CD4-positive, alpha-beta T cell (primary cell): ENCODE measurements at regions of chr6 and their contacts with region 1.

Region 1: DNA sequence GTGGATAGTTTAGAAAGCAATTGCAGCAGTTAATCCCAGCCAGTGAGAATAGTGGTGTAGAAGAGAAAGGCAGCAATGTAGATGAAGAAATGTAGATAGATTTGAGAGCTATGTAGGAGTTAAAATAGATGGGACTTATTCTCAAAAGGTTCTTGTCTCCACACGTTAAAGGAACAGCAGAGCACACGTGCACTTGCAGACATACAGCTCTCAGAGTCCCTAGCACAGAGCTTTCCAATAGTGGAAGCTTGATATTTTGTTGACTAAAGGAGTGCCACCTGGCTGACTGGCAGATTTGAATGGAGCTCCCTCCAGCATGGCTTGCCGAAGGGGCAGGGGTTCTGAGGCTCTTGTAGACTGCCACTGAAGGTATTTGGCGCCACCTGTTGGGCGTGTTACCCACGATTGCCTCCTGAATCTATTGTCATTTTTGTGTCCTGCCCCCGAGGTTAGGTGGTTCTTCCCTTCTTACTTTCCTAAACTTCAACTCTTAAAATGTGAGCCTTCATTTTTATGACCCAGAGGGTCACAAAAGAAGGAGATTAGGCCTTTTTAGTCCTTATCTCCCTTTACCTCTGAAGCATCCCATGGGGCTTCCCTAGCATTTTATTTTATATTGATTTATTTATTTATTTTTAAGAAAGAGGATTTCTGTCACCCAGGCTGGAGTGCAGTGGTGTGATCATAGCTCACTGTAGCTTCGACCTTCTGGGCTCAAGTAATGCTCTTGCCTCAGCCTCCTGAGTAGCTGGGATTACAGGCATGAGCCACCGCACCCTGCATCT is 16.4 kb downstream of the BRD2 start:
- DNase-seq: peak; percentile 83 to 97 (median 89)
- ATAC-seq: peak; percentile 98
- H3K4me3 ChIP-seq: no peak overlapping the region
- H3K4me3 Mint-ChIP-seq: no peak overlapping the region
- H3K27ac ChIP-seq: no peak overlapping the region
- H3K27ac Mint-ChIP-seq: peak overlapping the region; percentile 43
- H3K4me1 ChIP-seq: peaks cover 18% of the 10 kb centered on the region
- H3K4me1 Mint-ChIP-seq: peaks cover 28% of the 10 kb centered on the region
- H3K27me3 ChIP-seq: no peaks in the 10 kb centered on the region
- H3K27me3 Mint-ChIP-seq: no peaks in the 10 kb centered on the region
- CTCF ChIP-seq: peak; percentile 83

Region 2: GRCh38 chr6:31620586-31621319 is 1364.0 kb before region 1 on chr6 and contains the start of gene PRRC2A:
- CTCF ChIA-PET with region 1: no interaction called
- POLR2A ChIA-PET with region 1: no interaction called
- intact Hi-C with region 1: no loop called
- DNase-seq: peak in 10 of 14 experiments; percentile 71 to 96 (median 86)
- ATAC-seq: peak; percentile 20
- H3K4me3 ChIP-seq: peak within 1 kb of the TSS; percentile 74
- H3K4me3 Mint-ChIP-seq: peak within 1 kb of the TSS; percentile 93
- H3K27ac ChIP-seq: peak within 1 kb of the TSS; percentile 97 to 99
- H3K27ac Mint-ChIP-seq: peak within 1 kb of the TSS; percentile 92
- H3K4me1 ChIP-seq: peaks cover 38% of the 10 kb centered on the region
- H3K4me1 Mint-ChIP-seq: peaks cover 44% of the 10 kb centered on the region
- H3K27me3 ChIP-seq: no peaks in the 10 kb centered on the region
- H3K27me3 Mint-ChIP-seq: no peaks in the 10 kb centered on the region
- CTCF ChIP-seq: no peak
- total RNA-seq, gene PRRC2A: 206 to 215 TPM

Region 3: DNA sequence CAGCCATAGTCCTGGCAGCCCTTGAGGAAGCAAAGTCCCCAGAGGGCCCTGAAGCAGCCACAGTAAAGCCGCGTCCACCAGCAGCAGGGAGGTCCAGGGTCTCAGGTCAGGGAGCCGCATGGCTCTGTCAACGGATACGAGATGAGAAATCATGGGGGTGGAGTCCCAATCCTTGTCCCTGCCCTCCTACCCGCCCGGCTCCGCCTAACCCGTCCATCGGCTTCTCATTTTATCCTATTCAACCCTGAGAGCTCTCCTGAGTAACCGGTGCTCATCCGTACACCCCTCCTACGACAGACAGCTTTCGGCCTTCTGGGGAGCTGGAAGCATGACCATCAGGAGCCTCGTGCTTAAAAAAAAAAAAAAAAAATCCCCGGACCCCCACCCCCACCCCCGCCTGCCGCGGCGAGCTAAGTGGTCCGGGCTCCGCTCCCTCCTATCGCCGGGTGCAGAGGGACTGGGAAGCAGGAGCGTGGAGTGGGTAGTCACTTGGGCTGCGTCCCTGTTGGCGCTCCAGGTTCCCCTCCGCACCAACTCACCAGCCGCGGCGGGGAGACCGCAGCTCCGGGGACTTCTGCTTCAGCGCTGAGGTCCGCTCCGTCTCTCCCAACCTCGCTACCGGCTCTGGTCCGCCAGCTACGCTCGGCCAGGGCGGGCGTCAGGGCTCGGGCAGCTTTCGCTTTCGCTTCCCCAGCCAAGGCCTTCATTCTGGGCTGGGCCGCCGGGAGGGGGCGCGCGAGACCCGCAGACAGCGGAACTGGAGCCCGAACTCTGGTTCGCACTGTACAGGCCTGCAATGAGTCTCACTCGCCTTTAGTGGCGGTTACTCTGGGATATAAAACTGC is 146.5 kb before region 1 on chr6 and contains the start of gene TAP2:
- CTCF ChIA-PET with region 1: interaction called, 7 read pairs
- POLR2A ChIA-PET with region 1: interaction called, 13 read pairs
- intact Hi-C with region 1: no loop called
- DNase-seq: peak; percentile 93 to 99 (median 98)
- ATAC-seq: peak; percentile 86
- H3K4me3 ChIP-seq: peak within 1 kb of the TSS; percentile 77
- H3K4me3 Mint-ChIP-seq: peak within 1 kb of the TSS; percentile 97
- H3K27ac ChIP-seq: peak within 1 kb of the TSS; percentile 76 to 87
- H3K27ac Mint-ChIP-seq: peak within 1 kb of the TSS; percentile 99
- H3K4me1 ChIP-seq: peaks cover 67% of the 10 kb centered on the region
- H3K4me1 Mint-ChIP-seq: peaks cover 94% of the 10 kb centered on the region
- H3K27me3 ChIP-seq: no peaks in the 10 kb centered on the region
- H3K27me3 Mint-ChIP-seq: no peaks in the 10 kb centered on the region
- CTCF ChIP-seq: peak; percentile 93
- total RNA-seq, gene TAP2: 165 to 171 TPM

Region 4: DNA sequence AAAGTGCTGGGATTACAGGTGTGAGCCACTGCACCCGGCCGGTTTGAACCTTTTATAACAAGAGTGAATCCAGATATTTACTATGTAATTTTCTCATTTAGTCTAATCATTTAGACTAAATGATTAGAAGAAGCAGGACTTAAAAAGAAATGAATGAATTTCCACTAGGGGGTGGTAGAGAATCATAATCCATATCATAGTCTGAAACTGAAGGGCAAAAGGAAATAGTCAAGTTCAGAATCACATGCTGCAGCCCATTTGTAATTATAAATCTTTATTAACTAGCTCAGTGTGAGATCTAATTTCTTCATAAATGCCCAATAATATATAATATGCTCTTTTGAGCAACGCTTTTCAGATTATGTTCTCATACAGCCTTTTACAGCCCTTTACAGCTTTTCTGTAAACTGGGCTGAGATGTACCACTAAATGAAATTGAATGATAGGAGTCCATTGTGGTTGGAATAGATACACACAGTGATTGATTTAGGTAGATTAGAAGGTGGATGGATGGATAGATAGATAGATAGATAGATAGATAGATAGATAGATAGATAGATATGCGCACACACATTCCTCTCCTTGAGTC is 99.0 kb before region 1 on chr6:
- CTCF ChIA-PET with region 1: interaction called, 16 read pairs
- POLR2A ChIA-PET with region 1: interaction called, 13 read pairs
- intact Hi-C with region 1: loop called (anchors 1 kb)
- DNase-seq: peak in 3 of 14 experiments; percentile 83 to 85 (median 83)
- ATAC-seq: peak; percentile 65
- H3K4me3 ChIP-seq: no peak overlapping the region
- H3K4me3 Mint-ChIP-seq: no peak overlapping the region
- H3K27ac ChIP-seq: no peak overlapping the region
- H3K27ac Mint-ChIP-seq: no peak overlapping the region
- H3K4me1 ChIP-seq: no peaks in the 10 kb centered on the region
- H3K4me1 Mint-ChIP-seq: no peaks in the 10 kb centered on the region
- H3K27me3 ChIP-seq: no peaks in the 10 kb centered on the region
- H3K27me3 Mint-ChIP-seq: no peaks in the 10 kb centered on the region
- CTCF ChIP-seq: peak; percentile 73

Region 5: GRCh38 chr6:32933636-32934085 is 51.1 kb before region 1 on chr6:
- CTCF ChIA-PET with region 1: interaction called, 123 read pairs
- POLR2A ChIA-PET with region 1: interaction called, 34 read pairs
- intact Hi-C with region 1: loop called (anchors 1 kb)
- DNase-seq: peak; percentile 61 to 88 (median 74)
- ATAC-seq: peak; percentile 68
- H3K4me3 ChIP-seq: no peak overlapping the region
- H3K4me3 Mint-ChIP-seq: no peak overlapping the region
- H3K27ac ChIP-seq: no peak overlapping the region
- H3K27ac Mint-ChIP-seq: no peak overlapping the region
- H3K4me1 ChIP-seq: no peaks in the 10 kb centered on the region
- H3K4me1 Mint-ChIP-seq: peaks cover 6% of the 10 kb centered on the region
- H3K27me3 ChIP-seq: no peaks in the 10 kb centered on the region
- H3K27me3 Mint-ChIP-seq: no peaks in the 10 kb centered on the region
- CTCF ChIP-seq: peak; percentile 84

Region 6: DNA sequence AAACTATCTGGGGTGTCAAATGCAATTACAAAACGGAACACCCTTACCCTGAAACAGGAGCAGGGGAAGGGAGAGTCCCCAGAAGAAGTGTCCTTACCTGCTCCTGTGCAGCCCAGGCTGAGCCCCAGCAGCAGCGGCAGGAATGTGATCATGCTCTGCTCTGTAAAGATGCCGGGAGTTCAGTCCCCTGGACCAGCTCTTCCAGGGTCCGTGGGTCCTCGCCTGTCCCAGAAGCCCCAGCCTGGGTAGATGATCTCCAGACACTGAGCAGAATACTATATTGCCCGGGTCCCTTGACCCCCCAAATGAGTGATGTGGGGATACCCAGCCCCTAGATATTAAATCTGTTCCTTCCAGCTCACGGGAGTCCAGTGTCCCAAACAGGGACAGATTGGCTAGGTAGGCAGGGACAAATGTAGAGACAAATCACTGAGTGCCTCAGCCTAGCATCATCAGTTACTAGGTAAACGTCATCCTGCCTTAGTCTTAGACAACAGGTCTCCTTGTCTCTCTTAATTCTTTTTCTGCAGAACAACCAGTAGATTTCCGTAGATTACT is 44.1 kb before region 1 on chr6 and contains the start of gene HLA-DMB:
- CTCF ChIA-PET with region 1: interaction called, 13 read pairs
- POLR2A ChIA-PET with region 1: interaction called, 18 read pairs
- intact Hi-C with region 1: no loop called
- DNase-seq: peak in 10 of 14 experiments; percentile 15 to 89 (median 42)
- ATAC-seq: peak; percentile 85
- H3K4me3 ChIP-seq: peak within 1 kb of the TSS; percentile 72
- H3K4me3 Mint-ChIP-seq: peak within 1 kb of the TSS; percentile 96
- H3K27ac ChIP-seq: peak within 1 kb of the TSS; percentile 86 to 89
- H3K27ac Mint-ChIP-seq: peak within 1 kb of the TSS; percentile 99
- H3K4me1 ChIP-seq: peaks cover 58% of the 10 kb centered on the region
- H3K4me1 Mint-ChIP-seq: peaks cover 60% of the 10 kb centered on the region
- H3K27me3 ChIP-seq: no peaks in the 10 kb centered on the region
- H3K27me3 Mint-ChIP-seq: no peaks in the 10 kb centered on the region
- CTCF ChIP-seq: no peak
- total RNA-seq, gene HLA-DMB: 4.6 to 6.0 TPM

Region 7: DNA sequence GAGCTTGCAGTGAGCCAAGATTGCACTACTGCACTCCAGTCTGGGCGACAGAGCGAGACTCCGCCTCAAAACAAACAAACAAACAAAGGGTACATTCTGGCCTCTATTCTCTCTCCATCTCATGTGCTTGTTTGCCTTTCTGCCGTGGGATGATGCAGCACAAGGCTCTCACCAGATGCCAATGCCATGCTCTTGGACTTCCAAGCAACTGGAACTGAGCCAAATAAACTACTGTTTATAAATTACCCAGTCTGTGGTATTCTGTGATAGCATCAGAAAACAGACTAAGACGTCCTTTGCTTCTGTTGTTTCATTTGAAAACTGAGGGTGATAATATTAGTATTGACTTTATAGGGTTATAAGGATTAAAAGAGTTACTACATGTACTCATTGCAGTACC is 20.0 kb before region 1 on chr6:
- CTCF ChIA-PET with region 1: interaction called, 108 read pairs
- POLR2A ChIA-PET with region 1: interaction called, 347 read pairs
- intact Hi-C with region 1: loop called in 1 of 2 experiments (anchors 2 kb)
- DNase-seq: no peak
- ATAC-seq: no peak
- H3K4me3 ChIP-seq: no peak overlapping the region
- H3K4me3 Mint-ChIP-seq: peak overlapping the region; percentile 26
- H3K27ac ChIP-seq: no peak overlapping the region
- H3K27ac Mint-ChIP-seq: peak overlapping the region; percentile 100
- H3K4me1 ChIP-seq: peaks cover 27% of the 10 kb centered on the region
- H3K4me1 Mint-ChIP-seq: peaks cover 59% of the 10 kb centered on the region
- H3K27me3 ChIP-seq: no peaks in the 10 kb centered on the region
- H3K27me3 Mint-ChIP-seq: no peaks in the 10 kb centered on the region
- CTCF ChIP-seq: no peak

Region 8: DNA sequence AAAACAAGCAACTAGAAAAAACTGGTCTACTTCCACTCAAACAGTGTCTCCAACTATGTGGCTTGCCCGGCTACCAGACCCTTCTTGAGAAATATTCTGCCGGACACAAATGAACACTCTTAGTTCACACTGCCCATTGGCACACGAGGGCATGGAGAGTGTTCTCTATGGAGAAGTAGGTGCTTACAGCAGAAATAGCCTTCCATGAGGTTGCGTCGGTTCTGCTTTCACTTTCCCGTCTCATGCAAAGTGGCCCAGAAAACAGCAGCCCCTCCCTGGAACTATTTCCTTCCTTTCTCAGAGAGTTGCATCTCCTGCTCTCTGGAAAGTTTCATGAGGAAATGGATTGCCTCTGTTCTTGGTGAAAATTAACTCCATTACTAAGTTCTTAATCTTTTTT is 34.1 kb after region 1 on chr6:
- CTCF ChIA-PET with region 1: no interaction called
- POLR2A ChIA-PET with region 1: no interaction called
- intact Hi-C with region 1: no loop called
- DNase-seq: peak in 7 of 14 experiments; percentile 9 to 75 (median 26)
- ATAC-seq: peak; percentile 81
- H3K4me3 ChIP-seq: peak overlapping the region; percentile 30
- H3K4me3 Mint-ChIP-seq: peak overlapping the region; percentile 87
- H3K27ac ChIP-seq: no peak overlapping the region
- H3K27ac Mint-ChIP-seq: peak overlapping the region; percentile 70
- H3K4me1 ChIP-seq: peaks cover 21% of the 10 kb centered on the region
- H3K4me1 Mint-ChIP-seq: peaks cover 36% of the 10 kb centered on the region
- H3K27me3 ChIP-seq: peaks cover 3 to 5% of the 10 kb centered on the region in 2 experiments
- H3K27me3 Mint-ChIP-seq: peaks cover 5% of the 10 kb centered on the region
- CTCF ChIP-seq: no peak